Caco-2 (cell line): ENCODE measurements at regions of chr5 and their contacts with region 1.

Region 1: DNA sequence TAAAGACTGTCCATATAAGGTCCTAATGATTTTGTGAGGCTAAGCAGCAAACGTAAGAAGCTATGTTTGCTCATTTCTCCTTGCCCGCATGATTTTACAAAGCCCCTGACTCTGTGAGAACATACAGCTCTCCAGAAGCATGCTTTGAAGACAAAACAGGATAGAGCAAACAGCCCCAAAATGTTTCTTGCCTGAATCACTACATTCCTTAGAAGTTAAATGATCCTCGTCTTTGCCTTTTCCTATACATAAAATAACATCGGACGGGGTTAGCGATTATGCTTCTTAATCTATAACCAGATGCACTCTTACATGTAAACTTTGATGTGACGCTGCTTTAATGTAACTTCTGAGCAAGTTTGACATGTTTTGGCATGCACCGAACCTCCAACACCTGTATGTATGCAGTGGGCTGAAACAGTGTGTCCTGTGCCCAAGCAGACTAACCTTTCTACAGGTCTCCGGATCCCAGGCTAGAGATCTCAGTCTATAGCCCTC is 353.7 kb downstream of the CETN3 start:
- DNase-seq: peak; percentile 60 to 64
- H3K4me3 ChIP-seq: peak overlapping the region; percentile 10
- H3K4me3 Mint-ChIP-seq: peak overlapping the region; percentile 79
- H3K27ac Mint-ChIP-seq: peak overlapping the region; percentile 91
- H3K4me1 ChIP-seq: peaks cover 28% of the 10 kb centered on the region
- H3K4me1 Mint-ChIP-seq: peaks cover 10% of the 10 kb centered on the region
- H3K27me3 ChIP-seq: no peaks in the 10 kb centered on the region
- H3K27me3 Mint-ChIP-seq: no peaks in the 10 kb centered on the region
- CTCF ChIP-seq: no peak

Region 2: GRCh38 chr5:88502179-88503040 is 1553.5 kb before region 1 on chr5:
- CTCF ChIA-PET with region 1: no interaction called
- POLR2A ChIA-PET with region 1: no interaction called
- intact Hi-C with region 1: no loop called
- DNase-seq: no peak
- H3K4me3 ChIP-seq: no peak overlapping the region
- H3K4me3 Mint-ChIP-seq: no peak overlapping the region
- H3K27ac Mint-ChIP-seq: no peak overlapping the region
- H3K4me1 ChIP-seq: no peaks in the 10 kb centered on the region
- H3K4me1 Mint-ChIP-seq: no peaks in the 10 kb centered on the region
- H3K27me3 ChIP-seq: no peaks in the 10 kb centered on the region
- H3K27me3 Mint-ChIP-seq: peaks cover 8% of the 10 kb centered on the region
- CTCF ChIP-seq: no peak

Region 3: DNA sequence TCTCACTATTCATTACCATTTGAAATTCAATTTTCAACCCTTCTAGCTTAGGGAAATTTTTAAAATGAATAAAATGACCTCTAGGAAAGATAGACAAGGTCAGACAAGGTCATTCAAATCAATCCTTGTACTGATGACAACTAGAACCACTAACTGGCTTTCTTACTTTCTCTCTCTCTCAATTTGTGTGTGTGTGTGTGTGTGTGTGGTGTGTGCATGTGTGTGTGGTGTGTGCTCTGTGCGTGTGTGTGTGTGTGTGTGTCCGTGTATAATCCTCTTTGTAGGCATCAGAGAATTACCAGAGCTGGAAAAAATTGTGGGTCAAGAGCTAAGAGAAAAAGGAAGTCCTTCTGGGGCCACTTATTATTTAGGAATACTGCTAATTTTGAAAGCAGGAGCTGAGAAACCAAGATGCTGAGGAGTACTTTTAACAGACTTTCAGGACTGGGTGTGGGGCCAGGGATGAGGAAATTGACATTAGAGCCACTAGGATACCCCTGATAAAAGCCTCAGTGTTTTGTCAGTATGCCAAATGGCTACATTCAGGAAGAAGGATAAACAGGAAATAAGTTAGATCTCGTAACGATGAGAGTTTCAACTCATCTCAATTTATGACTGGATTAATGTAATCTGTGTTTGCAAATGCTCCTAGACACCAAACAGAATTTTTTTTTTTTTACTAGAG is 369.7 kb before region 1 on chr5:
- CTCF ChIA-PET with region 1: no interaction called
- POLR2A ChIA-PET with region 1: no interaction called
- intact Hi-C with region 1: no loop called
- DNase-seq: no peak
- H3K4me3 ChIP-seq: no peak overlapping the region
- H3K4me3 Mint-ChIP-seq: no peak overlapping the region
- H3K27ac Mint-ChIP-seq: no peak overlapping the region
- H3K4me1 ChIP-seq: no peaks in the 10 kb centered on the region
- H3K4me1 Mint-ChIP-seq: no peaks in the 10 kb centered on the region
- H3K27me3 ChIP-seq: no peaks in the 10 kb centered on the region
- H3K27me3 Mint-ChIP-seq: peaks cover 6% of the 10 kb centered on the region
- CTCF ChIP-seq: no peak

Region 4: GRCh38 chr5:89703817-89704216 is 352.1 kb before region 1 on chr5:
- CTCF ChIA-PET with region 1: no interaction called
- POLR2A ChIA-PET with region 1: no interaction called
- intact Hi-C with region 1: loop called (anchors 5 kb)
- DNase-seq: peak; percentile 39 to 41
- H3K4me3 ChIP-seq: no peak overlapping the region
- H3K4me3 Mint-ChIP-seq: no peak overlapping the region
- H3K27ac Mint-ChIP-seq: no peak overlapping the region
- H3K4me1 ChIP-seq: peaks cover 10% of the 10 kb centered on the region
- H3K4me1 Mint-ChIP-seq: peaks cover 8% of the 10 kb centered on the region
- H3K27me3 ChIP-seq: no peaks in the 10 kb centered on the region
- H3K27me3 Mint-ChIP-seq: peaks cover 1% of the 10 kb centered on the region
- CTCF ChIP-seq: no peak

Region 5: DNA sequence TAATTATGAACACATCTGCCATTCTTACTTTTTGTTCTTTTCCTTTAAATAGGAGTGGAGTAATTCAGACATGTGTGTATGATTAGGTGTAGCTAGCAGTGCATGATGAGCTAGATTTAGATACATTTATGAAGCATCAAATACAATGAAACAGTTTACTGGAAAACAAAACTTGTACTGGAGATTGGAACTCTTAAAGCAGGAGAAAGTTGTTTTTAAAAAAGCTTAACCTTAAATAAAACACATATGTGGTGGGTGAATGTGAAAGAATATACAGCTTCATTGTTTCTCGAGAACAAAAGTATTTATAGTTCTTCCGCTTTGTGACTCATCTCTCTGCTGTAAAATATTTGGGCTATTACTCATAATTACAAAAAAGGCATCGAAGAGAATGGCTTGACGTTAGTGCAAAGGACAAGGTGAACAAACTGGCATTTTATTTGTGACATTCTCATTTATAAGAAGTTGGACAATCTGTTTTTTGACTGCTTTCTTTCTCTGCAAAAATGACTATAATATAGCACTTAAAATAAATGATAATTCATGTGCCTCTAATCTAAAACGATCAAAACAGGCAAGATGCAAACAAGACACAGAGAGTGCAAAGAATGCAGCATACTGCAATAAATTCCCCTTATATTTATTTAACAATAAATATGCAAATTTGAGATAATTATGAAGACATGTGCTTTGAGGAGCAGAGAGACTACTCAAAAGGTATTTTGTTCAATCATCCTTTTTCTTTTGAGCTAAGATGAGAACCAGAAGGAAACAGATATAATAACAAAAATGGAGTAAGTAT is 125.1 kb before region 1 on chr5:
- CTCF ChIA-PET with region 1: no interaction called
- POLR2A ChIA-PET with region 1: no interaction called
- intact Hi-C with region 1: loop called (anchors 1 kb)
- DNase-seq: peak in 1 of 2 experiments; percentile 11
- H3K4me3 ChIP-seq: no peak overlapping the region
- H3K4me3 Mint-ChIP-seq: peak overlapping the region; percentile 52
- H3K27ac Mint-ChIP-seq: peak overlapping the region; percentile 58
- H3K4me1 ChIP-seq: peaks cover 24% of the 10 kb centered on the region
- H3K4me1 Mint-ChIP-seq: peaks cover 19% of the 10 kb centered on the region
- H3K27me3 ChIP-seq: no peaks in the 10 kb centered on the region
- H3K27me3 Mint-ChIP-seq: no peaks in the 10 kb centered on the region
- CTCF ChIP-seq: no peak

Region 6: DNA sequence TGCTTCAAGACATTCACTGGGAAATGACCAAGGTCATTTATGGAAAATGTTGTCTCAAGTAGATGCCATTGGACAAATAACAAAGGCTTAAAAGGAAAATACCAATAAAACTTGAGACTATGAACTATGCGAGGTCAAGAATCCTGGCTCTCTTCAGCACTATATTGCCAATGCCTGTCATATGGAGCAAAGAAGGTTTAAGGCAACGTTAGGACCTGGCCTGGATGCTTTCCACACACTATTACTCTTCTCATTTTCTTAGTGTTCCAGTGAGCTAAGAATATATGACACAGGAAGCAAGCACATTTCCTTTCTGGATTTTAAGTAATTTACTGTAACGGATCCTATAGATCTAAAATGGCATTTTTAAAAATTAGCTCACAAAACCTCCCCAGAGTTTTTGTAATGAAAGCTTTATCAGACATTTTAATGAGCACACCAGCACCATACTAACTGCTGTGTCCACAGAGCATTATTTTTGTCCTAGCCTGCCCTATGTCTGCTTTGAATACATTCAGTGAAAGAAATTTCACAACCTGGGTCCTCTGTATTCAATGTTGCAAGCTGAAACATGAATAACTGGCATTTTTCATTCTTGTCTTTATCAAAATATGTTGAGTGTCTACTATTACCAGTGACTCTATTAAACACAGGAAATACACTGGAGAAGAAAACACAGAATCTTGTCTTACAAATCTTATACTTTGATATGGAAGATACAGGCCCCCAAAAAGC is 38.0 kb after region 1 on chr5:
- CTCF ChIA-PET with region 1: no interaction called
- POLR2A ChIA-PET with region 1: no interaction called
- intact Hi-C with region 1: loop called (anchors 2 kb)
- DNase-seq: no peak
- H3K4me3 ChIP-seq: no peak overlapping the region
- H3K4me3 Mint-ChIP-seq: no peak overlapping the region
- H3K27ac Mint-ChIP-seq: no peak overlapping the region
- H3K4me1 ChIP-seq: peaks cover 36% of the 10 kb centered on the region
- H3K4me1 Mint-ChIP-seq: peaks cover 42% of the 10 kb centered on the region
- H3K27me3 ChIP-seq: no peaks in the 10 kb centered on the region
- H3K27me3 Mint-ChIP-seq: no peaks in the 10 kb centered on the region
- CTCF ChIP-seq: no peak

Region 7: DNA sequence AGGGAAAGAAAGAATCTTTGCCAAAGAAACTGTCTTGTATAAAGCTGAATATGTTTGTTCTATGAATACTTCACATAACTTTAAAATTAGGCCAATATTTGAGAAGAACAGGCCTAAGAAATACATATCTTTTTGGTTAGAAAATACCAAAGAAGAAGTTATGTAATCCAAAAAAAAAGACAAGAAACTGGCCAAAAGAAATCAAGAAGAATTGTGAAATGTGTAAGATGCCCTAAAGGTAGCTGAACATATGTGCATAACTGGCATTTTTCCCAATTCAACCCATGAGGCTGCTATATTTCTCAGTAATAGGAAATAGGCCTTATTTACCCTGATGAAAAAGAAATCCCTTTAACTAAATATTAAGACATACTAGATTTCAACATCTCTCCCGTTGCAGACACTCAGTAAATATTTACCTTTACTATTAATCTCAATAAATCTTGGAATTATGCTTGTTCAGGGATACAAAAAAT is 63.7 kb after region 1 on chr5:
- CTCF ChIA-PET with region 1: no interaction called
- POLR2A ChIA-PET with region 1: no interaction called
- intact Hi-C with region 1: loop called (anchors 1 kb)
- DNase-seq: peak in 1 of 2 experiments; percentile 30
- H3K4me3 ChIP-seq: no peak overlapping the region
- H3K4me3 Mint-ChIP-seq: no peak overlapping the region
- H3K27ac Mint-ChIP-seq: no peak overlapping the region
- H3K4me1 ChIP-seq: peaks cover 13% of the 10 kb centered on the region
- H3K4me1 Mint-ChIP-seq: peaks cover 5% of the 10 kb centered on the region
- H3K27me3 ChIP-seq: no peaks in the 10 kb centered on the region
- H3K27me3 Mint-ChIP-seq: no peaks in the 10 kb centered on the region
- CTCF ChIP-seq: no peak